GM12878 (cell line): ENCODE measurements at regions of chr1 and their contacts with region 1.

Region 1: GRCh38 chr1:152347116-152347728 is 12.6 kb downstream of the FLG2 start:
- DNase-seq: peak; percentile 9
- ATAC-seq: peak; percentile 84
- H3K4me3 ChIP-seq: no peak overlapping the region
- H3K27ac ChIP-seq: no peak overlapping the region
- H3K4me1 ChIP-seq: no peaks in the 10 kb centered on the region
- H3K27me3 ChIP-seq: no peaks in the 10 kb centered on the region
- CTCF ChIP-seq: peak; percentile 79 to 93 (median 85)
- EP300 ChIP-seq: no peak
- POLR2A ChIP-seq: no peak
- RAD21 ChIP-seq: peak; percentile 49

Region 2: DNA sequence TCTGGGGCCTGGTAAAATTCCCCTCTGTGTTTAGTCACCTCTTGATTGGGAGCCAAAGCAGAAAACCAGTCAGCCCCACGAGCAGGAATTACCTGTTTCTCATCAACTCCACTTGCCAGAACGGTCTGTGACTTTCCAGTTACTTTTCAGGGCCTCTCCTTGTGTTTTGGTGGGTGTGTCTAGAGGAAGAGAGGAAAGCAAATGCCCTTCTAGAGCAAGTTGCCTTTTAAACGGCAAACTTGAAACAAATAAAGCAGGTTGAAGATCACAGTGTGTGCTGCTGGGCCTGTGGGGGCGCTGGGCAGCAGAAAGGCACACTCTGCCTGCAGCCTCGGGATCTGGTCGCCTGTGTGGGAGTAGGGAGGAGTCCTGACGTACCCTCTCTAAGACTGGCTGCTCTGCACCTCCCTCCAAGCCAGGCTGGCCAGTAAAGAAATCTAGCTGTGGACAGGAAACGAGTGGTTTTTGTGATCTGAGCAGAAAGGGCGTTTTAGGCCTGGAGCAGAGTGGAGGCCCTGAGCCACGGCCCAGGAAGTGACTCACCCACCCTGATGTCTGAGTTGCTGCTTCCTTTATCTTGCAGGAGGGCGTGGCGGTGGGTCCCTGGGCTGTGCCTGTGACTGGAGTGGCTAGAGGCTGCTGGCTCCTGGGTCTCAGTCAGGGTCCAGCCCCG is 299.4 kb before region 1 on chr1:
- CTCF ChIA-PET with region 1: interaction called, 5 read pairs
- POLR2A ChIA-PET with region 1: no interaction called
- RAD21 ChIA-PET with region 1: no interaction called
- SMC1A ChIA-PET with region 1: no interaction called
- in situ Hi-C with region 1: no loop called
- intact Hi-C with region 1: loop called (anchors 10 kb)
- DNase-seq: peak; percentile 96
- ATAC-seq: peak; percentile 97
- H3K4me3 ChIP-seq: peak overlapping the region; percentile 20; the same call in 1 of the 2 replicates
- H3K27ac ChIP-seq: peak overlapping the region; percentile 80
- H3K4me1 ChIP-seq: peaks cover 15% of the 10 kb centered on the region
- H3K27me3 ChIP-seq: 0 out of 4 replicates have a peak, but pooled peaks cover 0 to 3% of the 10 kb centered on the region in 2 experiments
- CTCF ChIP-seq: peak; percentile 51 to 65 (median 65)
- EP300 ChIP-seq: no peak
- POLR2A ChIP-seq: peak; percentile 77
- RAD21 ChIP-seq: no peak

Region 3: DNA sequence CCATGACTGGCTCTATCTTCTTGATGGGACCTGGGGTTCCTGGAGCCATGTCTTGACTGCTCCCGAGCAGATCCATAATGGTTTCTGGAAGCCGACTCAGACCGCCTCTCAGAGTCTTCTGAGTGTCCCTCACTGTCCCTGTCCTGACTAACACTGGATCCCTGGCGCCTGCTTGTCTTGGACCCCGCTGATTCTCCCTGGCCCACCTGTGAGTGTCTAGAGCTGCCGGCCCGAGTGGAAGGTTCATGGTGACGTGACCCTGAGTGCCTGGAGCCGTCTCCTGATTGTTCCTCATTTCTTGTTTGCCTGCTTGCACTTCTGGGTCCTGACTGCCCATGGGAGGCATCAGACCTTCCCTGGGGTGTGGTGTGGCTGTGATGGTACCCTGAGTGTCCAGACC is 37.3 kb before region 1 on chr1:
- CTCF ChIA-PET with region 1: no interaction called
- POLR2A ChIA-PET with region 1: no interaction called
- RAD21 ChIA-PET with region 1: no interaction called
- SMC1A ChIA-PET with region 1: no interaction called
- in situ Hi-C with region 1: no loop called
- intact Hi-C with region 1: no loop called
- DNase-seq: no peak
- ATAC-seq: no peak
- H3K4me3 ChIP-seq: no peak overlapping the region
- H3K27ac ChIP-seq: no peak overlapping the region
- H3K4me1 ChIP-seq: no peaks in the 10 kb centered on the region
- H3K27me3 ChIP-seq: no peaks in the 10 kb centered on the region
- CTCF ChIP-seq: no peak
- EP300 ChIP-seq: no peak
- POLR2A ChIP-seq: no peak
- RAD21 ChIP-seq: no peak

Region 4: DNA sequence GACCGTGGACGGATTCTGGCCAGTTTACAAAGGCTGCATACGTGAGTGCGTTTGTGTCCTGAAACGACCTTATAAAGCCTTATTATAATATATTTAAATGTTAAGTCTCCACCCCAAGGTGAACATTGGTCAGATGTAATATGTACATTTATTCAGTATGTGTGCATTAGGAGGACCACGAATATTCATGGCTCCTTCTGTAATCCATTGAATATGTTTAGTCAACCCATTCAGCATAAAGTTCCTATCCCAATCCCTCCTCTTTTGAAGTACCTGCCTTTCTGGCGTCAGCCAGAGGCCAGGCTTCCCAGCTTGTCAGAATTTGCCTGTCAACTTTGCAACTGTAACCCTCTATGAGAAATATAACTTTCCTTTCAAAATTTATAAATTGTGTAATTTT is 11.8 kb before region 1 on chr1:
- CTCF ChIA-PET with region 1: interaction called, 11 read pairs
- POLR2A ChIA-PET with region 1: no interaction called
- RAD21 ChIA-PET with region 1: no interaction called
- SMC1A ChIA-PET with region 1: no interaction called
- in situ Hi-C with region 1: no loop called
- intact Hi-C with region 1: no loop called
- DNase-seq: no peak
- ATAC-seq: no peak
- H3K4me3 ChIP-seq: no peak overlapping the region
- H3K27ac ChIP-seq: no peak overlapping the region
- H3K4me1 ChIP-seq: no peaks in the 10 kb centered on the region
- H3K27me3 ChIP-seq: peaks cover 0 to 2% of the 10 kb centered on the region in 2 experiments; a peak in 1 of 4 replicates
- CTCF ChIP-seq: no peak
- EP300 ChIP-seq: no peak
- POLR2A ChIP-seq: no peak
- RAD21 ChIP-seq: no peak

Region 5: GRCh38 chr1:152359906-152360305 is 12.7 kb after region 1 on chr1 and contains the start of gene FLG2:
- CTCF ChIA-PET with region 1: interaction called, 10 read pairs
- POLR2A ChIA-PET with region 1: no interaction called
- RAD21 ChIA-PET with region 1: no interaction called
- SMC1A ChIA-PET with region 1: no interaction called
- in situ Hi-C with region 1: no loop called
- intact Hi-C with region 1: no loop called
- DNase-seq: no peak
- ATAC-seq: no peak
- H3K4me3 ChIP-seq: no peak within 1 kb of the TSS
- H3K27ac ChIP-seq: no peak within 1 kb of the TSS
- H3K4me1 ChIP-seq: no peaks in the 10 kb centered on the region
- H3K27me3 ChIP-seq: no peaks in the 10 kb centered on the region
- CTCF ChIP-seq: no peak
- EP300 ChIP-seq: no peak
- POLR2A ChIP-seq: no peak
- RAD21 ChIP-seq: no peak
- polyA plus RNA-seq, gene FLG2: not detected

Region 6: GRCh38 chr1:152440635-152441471 is 93.6 kb after region 1 on chr1:
- CTCF ChIA-PET with region 1: interaction called, 18 read pairs
- POLR2A ChIA-PET with region 1: no interaction called
- RAD21 ChIA-PET with region 1: no interaction called
- SMC1A ChIA-PET with region 1: interaction called, 6 read pairs
- in situ Hi-C with region 1: no loop called
- intact Hi-C with region 1: no loop called
- DNase-seq: peak; percentile 38
- ATAC-seq: peak; percentile 100
- H3K4me3 ChIP-seq: no peak overlapping the region
- H3K27ac ChIP-seq: no peak overlapping the region
- H3K4me1 ChIP-seq: no peaks in the 10 kb centered on the region
- H3K27me3 ChIP-seq: 0 out of 4 replicates have a peak, but pooled peaks cover 0 to 2% of the 10 kb centered on the region in 2 experiments
- CTCF ChIP-seq: peak; percentile 85 to 91 (median 85)
- EP300 ChIP-seq: no peak
- POLR2A ChIP-seq: no peak
- RAD21 ChIP-seq: peak; percentile 79